CD8-positive, alpha-beta T cell (primary cell): ENCODE measurements at regions of chr22 and their contacts with region 1.

Region 1: GRCh38 chr22:38398609-38399461 is 56.2 kb downstream of the KCNJ4 start:
- DNase-seq: peak; percentile 67 to 91 (median 82)
- ATAC-seq: peak; percentile 79
- H3K4me3 ChIP-seq: peak overlapping the region; percentile 55 to 60
- H3K4me3 Mint-ChIP-seq: peak overlapping the region; percentile 81
- H3K27ac ChIP-seq: peak overlapping the region in 1 of 2 experiments; percentile 30
- H3K27ac Mint-ChIP-seq: no peak overlapping the region
- H3K4me1 ChIP-seq: no peaks in the 10 kb centered on the region
- H3K4me1 Mint-ChIP-seq: peaks cover 18% of the 10 kb centered on the region
- H3K27me3 ChIP-seq: no peaks in the 10 kb centered on the region
- H3K27me3 Mint-ChIP-seq: no peaks in the 10 kb centered on the region
- CTCF ChIP-seq: no peak

Region 2: GRCh38 chr22:37807410-37808293 is 591.2 kb before region 1 on chr22 and contains the start of gene GCAT:
- CTCF ChIA-PET with region 1: no interaction called
- POLR2A ChIA-PET with region 1: no interaction called
- intact Hi-C with region 1: loop called in 1 of 2 experiments (anchors 10 kb)
- DNase-seq: peak; percentile 63 to 92 (median 83)
- ATAC-seq: peak; percentile 91
- H3K4me3 ChIP-seq: peak within 1 kb of the TSS; percentile 51 to 55
- H3K4me3 Mint-ChIP-seq: peak within 1 kb of the TSS; percentile 75
- H3K27ac ChIP-seq: no peak within 1 kb of the TSS
- H3K27ac Mint-ChIP-seq: no peak within 1 kb of the TSS
- H3K4me1 ChIP-seq: peaks cover 37% of the 10 kb centered on the region
- H3K4me1 Mint-ChIP-seq: peaks cover 36% of the 10 kb centered on the region
- H3K27me3 ChIP-seq: peaks cover 17 to 66% of the 10 kb centered on the region in 2 experiments
- H3K27me3 Mint-ChIP-seq: peaks cover 47% of the 10 kb centered on the region
- CTCF ChIP-seq: no peak
- total RNA-seq, gene GCAT: 1.3 to 1.6 TPM

Region 3: GRCh38 chr22:38056969-38057891 is 341.6 kb before region 1 on chr22 and contains the start of gene PICK1:
- CTCF ChIA-PET with region 1: no interaction called
- POLR2A ChIA-PET with region 1: no interaction called
- intact Hi-C with region 1: loop called in 1 of 2 experiments (anchors 2 kb)
- DNase-seq: peak; percentile 56 to 89 (median 77)
- ATAC-seq: peak; percentile 80
- H3K4me3 ChIP-seq: peak within 1 kb of the TSS; percentile 83 to 97
- H3K4me3 Mint-ChIP-seq: peak within 1 kb of the TSS; percentile 98
- H3K27ac ChIP-seq: peak within 1 kb of the TSS; percentile 79 to 91
- H3K27ac Mint-ChIP-seq: peak within 1 kb of the TSS; percentile 98
- H3K4me1 ChIP-seq: peaks cover 15% of the 10 kb centered on the region
- H3K4me1 Mint-ChIP-seq: peaks cover 19% of the 10 kb centered on the region
- H3K27me3 ChIP-seq: no peaks in the 10 kb centered on the region
- H3K27me3 Mint-ChIP-seq: no peaks in the 10 kb centered on the region
- CTCF ChIP-seq: no peak
- total RNA-seq, gene PICK1: 23.1 to 24.8 TPM

Region 4: GRCh38 chr22:38272373-38273134 is 126.3 kb before region 1 on chr22 and contains the start of gene TMEM184B:
- CTCF ChIA-PET with region 1: no interaction called
- POLR2A ChIA-PET with region 1: no interaction called
- intact Hi-C with region 1: loop called (anchors 5 kb)
- DNase-seq: peak; percentile 62 to 93 (median 78)
- ATAC-seq: peak; percentile 94
- H3K4me3 ChIP-seq: peak within 1 kb of the TSS; percentile 70 to 77
- H3K4me3 Mint-ChIP-seq: peak within 1 kb of the TSS; percentile 92
- H3K27ac ChIP-seq: peak within 1 kb of the TSS; percentile 59 to 93
- H3K27ac Mint-ChIP-seq: peak within 1 kb of the TSS; percentile 95
- H3K4me1 ChIP-seq: peaks cover 31% of the 10 kb centered on the region
- H3K4me1 Mint-ChIP-seq: peaks cover 50% of the 10 kb centered on the region
- H3K27me3 ChIP-seq: no peaks in the 10 kb centered on the region
- H3K27me3 Mint-ChIP-seq: peaks cover 3% of the 10 kb centered on the region
- CTCF ChIP-seq: no peak
- total RNA-seq, gene TMEM184B: 53.0 TPM

Region 5: GRCh38 chr22:38317122-38317994 is 81.5 kb before region 1 on chr22 and contains the start of gene CSNK1E:
- CTCF ChIA-PET with region 1: no interaction called
- POLR2A ChIA-PET with region 1: no interaction called
- intact Hi-C with region 1: loop called (anchors 2 kb)
- DNase-seq: peak; percentile 39 to 85 (median 73)
- ATAC-seq: peak; percentile 61
- H3K4me3 ChIP-seq: peak within 1 kb of the TSS; percentile 59 to 60
- H3K4me3 Mint-ChIP-seq: peak within 1 kb of the TSS; percentile 88
- H3K27ac ChIP-seq: peak within 1 kb of the TSS; percentile 80 to 89
- H3K27ac Mint-ChIP-seq: peak within 1 kb of the TSS; percentile 96
- H3K4me1 ChIP-seq: peaks cover 43% of the 10 kb centered on the region
- H3K4me1 Mint-ChIP-seq: peaks cover 45% of the 10 kb centered on the region
- H3K27me3 ChIP-seq: no peaks in the 10 kb centered on the region
- H3K27me3 Mint-ChIP-seq: no peaks in the 10 kb centered on the region
- CTCF ChIP-seq: no peak
- total RNA-seq, gene CSNK1E: 172 to 178 TPM

Region 6: DNA sequence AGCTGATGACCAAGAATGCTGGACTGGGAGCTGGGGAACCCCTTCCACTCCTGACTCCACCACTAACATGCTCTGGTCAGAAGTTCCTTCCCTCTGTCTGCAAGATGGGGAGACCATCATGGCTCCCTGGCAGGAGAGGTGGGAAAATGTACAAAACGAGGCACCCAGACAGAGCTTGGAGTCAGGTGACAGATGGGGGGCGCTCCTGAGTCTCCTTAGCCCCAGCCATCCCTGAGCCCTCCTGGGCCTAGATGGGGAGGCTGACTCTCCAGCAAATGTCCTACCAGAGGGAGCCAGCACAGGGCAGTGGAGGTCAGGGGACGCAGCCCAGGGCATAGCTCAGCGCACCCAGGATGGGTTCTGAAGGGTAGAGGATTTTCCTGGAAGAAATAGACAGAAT is 36.2 kb after region 1 on chr22:
- CTCF ChIA-PET with region 1: no interaction called
- POLR2A ChIA-PET with region 1: no interaction called
- intact Hi-C with region 1: no loop called
- DNase-seq: no peak
- ATAC-seq: no peak
- H3K4me3 ChIP-seq: no peak overlapping the region
- H3K4me3 Mint-ChIP-seq: no peak overlapping the region
- H3K27ac ChIP-seq: no peak overlapping the region
- H3K27ac Mint-ChIP-seq: no peak overlapping the region
- H3K4me1 ChIP-seq: no peaks in the 10 kb centered on the region
- H3K4me1 Mint-ChIP-seq: no peaks in the 10 kb centered on the region
- H3K27me3 ChIP-seq: no peaks in the 10 kb centered on the region
- H3K27me3 Mint-ChIP-seq: no peaks in the 10 kb centered on the region
- CTCF ChIP-seq: no peak

Region 7: GRCh38 chr22:38674888-38675287 is 276.1 kb after region 1 on chr22:
- CTCF ChIA-PET with region 1: no interaction called
- POLR2A ChIA-PET with region 1: no interaction called
- intact Hi-C with region 1: no loop called
- DNase-seq: no peak
- ATAC-seq: no peak
- H3K4me3 ChIP-seq: no peak overlapping the region
- H3K4me3 Mint-ChIP-seq: no peak overlapping the region
- H3K27ac ChIP-seq: no peak overlapping the region
- H3K27ac Mint-ChIP-seq: peak overlapping the region; percentile 27
- H3K4me1 ChIP-seq: no peaks in the 10 kb centered on the region
- H3K4me1 Mint-ChIP-seq: no peaks in the 10 kb centered on the region
- H3K27me3 ChIP-seq: no peaks in the 10 kb centered on the region
- H3K27me3 Mint-ChIP-seq: no peaks in the 10 kb centered on the region
- CTCF ChIP-seq: no peak